ENCODE measurements at regions of chr2 and their contacts with region 1.

Region 1: DNA sequence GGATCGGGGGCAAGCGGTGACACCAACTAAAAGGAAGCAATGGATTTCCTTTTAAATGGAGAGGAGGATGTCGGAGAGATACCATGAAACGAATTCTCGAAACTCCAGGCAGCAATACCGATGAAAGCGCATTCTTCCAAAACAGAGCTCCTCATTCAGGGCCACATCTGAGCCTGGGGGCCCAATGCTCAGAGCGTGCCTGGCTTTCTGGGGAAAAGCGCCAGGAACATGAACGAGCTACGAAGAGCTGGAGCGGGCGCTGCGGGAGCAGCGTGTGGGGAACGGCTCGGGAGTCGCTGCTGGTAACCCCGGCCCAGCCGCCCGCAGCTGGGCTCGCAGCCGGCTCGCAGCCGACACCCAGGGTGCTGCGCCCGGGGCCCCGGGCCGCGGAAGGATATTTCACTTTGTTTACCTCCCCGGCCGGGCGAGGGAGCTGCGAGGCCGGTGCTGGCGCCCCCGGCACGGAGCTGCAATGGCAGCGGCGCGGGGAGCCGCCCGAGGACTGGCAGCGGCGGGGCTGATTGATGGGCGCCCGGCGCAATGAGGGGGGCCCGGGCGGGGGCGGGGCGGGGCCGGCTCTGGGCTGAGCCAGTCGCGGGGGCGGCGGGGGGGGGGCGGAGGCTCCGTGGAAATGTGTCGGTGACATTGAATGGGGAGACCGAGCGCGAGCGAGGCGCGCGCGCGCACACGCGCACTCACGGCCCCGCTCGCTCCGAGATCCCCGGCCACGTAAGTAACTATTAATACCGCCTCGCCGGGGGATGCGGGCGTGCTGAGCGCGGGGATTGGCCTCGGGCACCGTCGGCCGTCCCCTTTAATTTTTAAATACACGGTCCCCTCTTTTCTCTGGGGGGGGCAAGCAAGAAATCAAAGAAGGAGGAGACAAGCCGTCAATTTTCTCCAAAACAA is at the start of gene TRIB2:
- DNase-seq: peak; percentile 92
- ATAC-seq: peak; percentile 89
- H3K4me3 Mint-ChIP-seq: peak within 1 kb of the TSS; percentile 99
- H3K27ac Mint-ChIP-seq: peak within 1 kb of the TSS; percentile 97
- H3K4me1 Mint-ChIP-seq: peaks cover 49% of the 10 kb centered on the region
- H3K27me3 Mint-ChIP-seq: peaks cover 4% of the 10 kb centered on the region
- total RNA-seq, gene TRIB2: 52.7 to 57.7 TPM

Region 2: DNA sequence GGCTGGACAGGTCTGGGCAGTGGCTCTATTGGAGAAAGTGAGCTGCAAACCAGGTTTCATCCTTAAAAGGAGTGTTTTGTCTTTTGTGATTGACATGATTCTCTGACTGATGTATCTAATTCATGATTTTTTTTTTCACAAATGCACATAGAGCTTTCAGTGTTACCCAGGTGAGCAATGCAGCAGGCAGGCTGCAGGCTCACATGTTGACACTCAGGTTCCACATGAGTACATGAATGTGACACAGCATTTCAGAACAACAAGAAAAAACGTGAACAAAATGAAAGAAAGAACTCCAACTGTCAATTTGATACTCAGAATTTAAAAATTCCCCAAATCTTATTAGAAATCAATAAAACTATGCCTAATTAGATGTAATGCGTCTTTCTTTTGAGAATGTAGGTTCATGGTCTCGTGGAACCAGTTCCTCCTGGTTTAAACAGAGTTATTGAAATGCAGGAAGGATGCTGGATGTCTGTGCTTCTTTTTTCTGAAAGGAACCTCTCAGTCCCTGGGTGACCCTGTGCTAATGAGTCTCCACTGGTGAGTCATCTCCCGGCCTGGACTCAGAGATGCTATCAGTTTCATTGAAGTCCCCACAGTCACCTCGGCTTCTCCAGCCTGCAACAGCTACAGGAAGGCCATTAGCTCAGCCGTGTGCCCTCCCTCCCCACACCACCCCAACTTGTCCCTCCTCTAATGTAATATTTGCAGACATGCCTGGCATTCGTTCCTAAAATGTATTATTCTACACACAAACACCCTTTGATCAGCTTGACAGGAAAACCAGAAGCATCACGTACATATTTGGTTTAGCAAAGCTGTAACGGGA is 539.7 kb before region 1 on chr2:
- CTCF ChIA-PET with region 1: interaction called, 10 read pairs
- POLR2A ChIA-PET with region 1: no interaction called
- DNase-seq: peak; percentile 58
- ATAC-seq: peak; percentile 80
- H3K4me3 Mint-ChIP-seq: peak overlapping the region; percentile 44
- H3K27ac Mint-ChIP-seq: peak overlapping the region; percentile 89
- H3K4me1 Mint-ChIP-seq: peaks cover 43% of the 10 kb centered on the region
- H3K27me3 Mint-ChIP-seq: no peaks in the 10 kb centered on the region

Region 3: GRCh38 chr2:12416600-12416999 is 299.9 kb before region 1 on chr2:
- CTCF ChIA-PET with region 1: interaction called, 51 read pairs
- POLR2A ChIA-PET with region 1: interaction called, 5 read pairs
- DNase-seq: peak; percentile 64
- ATAC-seq: peak; percentile 38
- H3K4me3 Mint-ChIP-seq: no peak overlapping the region
- H3K27ac Mint-ChIP-seq: peak overlapping the region; percentile 17
- H3K4me1 Mint-ChIP-seq: peaks cover 39% of the 10 kb centered on the region
- H3K27me3 Mint-ChIP-seq: no peaks in the 10 kb centered on the region

Region 4: DNA sequence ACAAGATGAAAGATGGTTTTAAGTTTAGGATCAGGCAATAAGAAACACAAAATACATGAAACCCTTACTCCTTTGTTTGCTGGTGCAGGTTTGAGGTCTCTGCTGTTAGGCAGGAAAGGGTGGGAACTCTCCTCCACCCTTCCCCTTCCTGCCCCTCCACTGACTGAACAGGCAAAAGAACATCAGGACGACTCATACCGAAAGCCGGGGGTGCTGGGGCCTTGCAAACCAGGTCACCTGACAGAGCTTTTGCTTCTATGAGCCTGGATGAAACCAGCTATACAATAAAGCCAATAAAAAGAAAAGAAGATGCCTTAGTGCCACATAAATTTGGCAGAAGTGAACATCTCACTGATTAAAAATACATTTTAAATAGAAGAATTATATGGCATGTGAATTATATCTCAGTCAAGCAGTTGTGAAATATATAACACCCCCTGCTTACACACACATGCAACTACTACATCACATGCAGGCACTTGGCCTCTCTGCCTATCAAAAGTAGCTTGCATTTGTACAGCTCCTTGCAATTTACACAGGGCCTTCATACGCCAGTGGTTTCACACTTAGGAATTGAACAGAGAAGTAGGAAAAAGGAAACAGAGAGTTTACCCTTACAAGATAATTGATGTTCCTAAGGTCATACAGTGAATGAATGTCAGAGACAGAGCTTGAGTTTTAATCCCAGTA is 214.9 kb before region 1 on chr2:
- CTCF ChIA-PET with region 1: interaction called, 28 read pairs
- POLR2A ChIA-PET with region 1: no interaction called
- DNase-seq: peak; percentile 91
- ATAC-seq: peak; percentile 95
- H3K4me3 Mint-ChIP-seq: peak overlapping the region; percentile 54
- H3K27ac Mint-ChIP-seq: peak overlapping the region; percentile 92
- H3K4me1 Mint-ChIP-seq: peaks cover 93% of the 10 kb centered on the region
- H3K27me3 Mint-ChIP-seq: no peaks in the 10 kb centered on the region

Region 5: DNA sequence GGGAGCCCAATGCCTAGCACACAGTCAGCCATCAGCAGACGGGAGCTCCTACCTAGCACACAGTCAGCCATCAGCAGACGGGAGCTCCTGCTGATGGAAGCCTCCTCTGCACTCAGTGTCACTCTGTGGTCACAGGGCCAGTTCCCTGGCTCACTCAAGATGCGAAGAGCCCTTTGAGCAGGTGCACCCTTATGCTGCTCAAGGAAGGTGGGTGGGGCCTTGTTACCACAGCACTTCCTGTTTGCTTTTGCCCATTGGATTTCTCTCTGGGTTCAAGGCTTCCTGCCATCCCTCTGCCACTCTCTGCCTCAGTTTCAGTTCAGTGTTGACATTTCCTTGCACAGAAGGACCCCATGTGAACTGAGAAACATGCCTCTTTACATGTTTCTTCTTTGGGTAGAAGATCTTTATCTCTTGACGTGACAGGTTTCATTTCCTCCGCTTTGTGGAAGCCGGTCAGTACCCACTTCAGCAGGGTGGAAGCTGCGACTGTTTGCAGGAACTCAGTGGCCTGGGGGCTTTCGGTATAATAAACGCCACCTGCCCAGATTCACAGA is 11.8 kb after region 1 on chr2:
- CTCF ChIA-PET with region 1: interaction called, 31 read pairs
- POLR2A ChIA-PET with region 1: interaction called, 22 read pairs
- DNase-seq: peak; percentile 89
- ATAC-seq: peak; percentile 90
- H3K4me3 Mint-ChIP-seq: peak overlapping the region; percentile 67
- H3K27ac Mint-ChIP-seq: peak overlapping the region; percentile 86
- H3K4me1 Mint-ChIP-seq: peaks cover 85% of the 10 kb centered on the region
- H3K27me3 Mint-ChIP-seq: no peaks in the 10 kb centered on the region

Region 6: GRCh38 chr2:12769492-12770105 is 53.1 kb after region 1 on chr2:
- CTCF ChIA-PET with region 1: no interaction called
- POLR2A ChIA-PET with region 1: no interaction called
- DNase-seq: no peak
- ATAC-seq: no peak
- H3K4me3 Mint-ChIP-seq: no peak overlapping the region
- H3K27ac Mint-ChIP-seq: no peak overlapping the region
- H3K4me1 Mint-ChIP-seq: no peaks in the 10 kb centered on the region
- H3K27me3 Mint-ChIP-seq: peaks cover 31% of the 10 kb centered on the region

Region 7: GRCh38 chr2:12835733-12836132 is 119.2 kb after region 1 on chr2:
- CTCF ChIA-PET with region 1: no interaction called
- POLR2A ChIA-PET with region 1: no interaction called
- DNase-seq: no peak
- ATAC-seq: no peak
- H3K4me3 Mint-ChIP-seq: no peak overlapping the region
- H3K27ac Mint-ChIP-seq: no peak overlapping the region
- H3K4me1 Mint-ChIP-seq: no peaks in the 10 kb centered on the region
- H3K27me3 Mint-ChIP-seq: peaks cover 32% of the 10 kb centered on the region

Region 8: GRCh38 chr2:13006829-13007717 is 290.5 kb after region 1 on chr2:
- CTCF ChIA-PET with region 1: interaction called, 46 read pairs
- POLR2A ChIA-PET with region 1: interaction called, 5 read pairs
- DNase-seq: peak; percentile 78
- ATAC-seq: peak; percentile 85
- H3K4me3 Mint-ChIP-seq: no peak overlapping the region
- H3K27ac Mint-ChIP-seq: no peak overlapping the region
- H3K4me1 Mint-ChIP-seq: peaks cover 6% of the 10 kb centered on the region
- H3K27me3 Mint-ChIP-seq: peaks cover 36% of the 10 kb centered on the region